H1 (cell line): ENCODE measurements at regions of chr3 and their contacts with region 1.

Region 1: GRCh38 chr3:8622873-8623691 is 21.5 kb downstream of the SSUH2 start:
- DNase-seq: peak; percentile 61 to 89
- H3K4me3 ChIP-seq: no peak overlapping the region; a peak in 1 of 8 replicates
- H3K27ac ChIP-seq: no peak overlapping the region
- H3K4me1 ChIP-seq: peaks cover 0 to 10% (median 3%) of the 10 kb centered on the region in 4 experiments; a peak in 5 of 7 replicates
- H3K27me3 ChIP-seq: no peaks in the 10 kb centered on the region
- CTCF ChIP-seq: peak; percentile 93 to 98 (median 93)
- EP300 ChIP-seq: peak in 1 of 2 experiments; percentile 44; a peak in 1 of 3 replicates
- POLR2A ChIP-seq: no peak
- RAD21 ChIP-seq: peak; percentile 99

Region 2: GRCh38 chr3:8254489-8254888 is 368.6 kb before region 1 on chr3:
- CTCF ChIA-PET with region 1: no interaction called
- POLR2A ChIA-PET with region 1: no interaction called
- DNase-seq: no peak
- H3K4me3 ChIP-seq: no peak overlapping the region
- H3K27ac ChIP-seq: no peak overlapping the region
- H3K4me1 ChIP-seq: no peaks in the 10 kb centered on the region
- H3K27me3 ChIP-seq: no peaks in the 10 kb centered on the region
- CTCF ChIP-seq: no peak
- EP300 ChIP-seq: no peak
- POLR2A ChIP-seq: no peak
- RAD21 ChIP-seq: no peak

Region 3: DNA sequence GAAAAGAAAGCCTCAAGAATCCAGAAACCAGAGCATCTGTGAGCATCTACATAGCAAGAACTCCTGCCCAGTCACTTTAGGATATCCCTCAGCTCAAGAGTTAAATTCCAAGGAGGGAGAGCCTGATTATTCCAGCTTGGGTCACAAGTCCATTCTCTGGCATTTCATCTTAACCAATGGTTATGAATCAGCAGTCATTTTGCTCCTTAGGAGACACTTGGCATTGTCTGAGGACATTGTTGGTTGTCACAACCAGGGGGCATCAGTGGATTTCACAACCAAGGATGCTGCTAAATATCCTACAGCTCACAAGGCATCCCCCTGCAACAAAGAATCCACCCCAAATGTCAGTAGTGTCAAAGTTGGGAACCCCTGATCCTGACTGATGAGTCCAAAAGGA is 172.5 kb before region 1 on chr3:
- CTCF ChIA-PET with region 1: interaction called, 12 read pairs
- POLR2A ChIA-PET with region 1: no interaction called
- DNase-seq: no peak
- H3K4me3 ChIP-seq: no peak overlapping the region
- H3K27ac ChIP-seq: no peak overlapping the region
- H3K4me1 ChIP-seq: no peaks in the 10 kb centered on the region
- H3K27me3 ChIP-seq: no peaks in the 10 kb centered on the region
- CTCF ChIP-seq: peak in 2 of 3 experiments; percentile 43 to 49; a peak in 3 of 4 replicates
- EP300 ChIP-seq: no peak
- POLR2A ChIP-seq: no peak
- RAD21 ChIP-seq: peak; percentile 71 to 77

Region 4: GRCh38 chr3:8539419-8539818 is 83.7 kb before region 1 on chr3:
- CTCF ChIA-PET with region 1: no interaction called
- POLR2A ChIA-PET with region 1: no interaction called
- DNase-seq: no peak
- H3K4me3 ChIP-seq: no peak overlapping the region
- H3K27ac ChIP-seq: no peak overlapping the region
- H3K4me1 ChIP-seq: peaks cover 0 to 8% (median 5%) of the 10 kb centered on the region in 4 experiments; a peak in 4 of 7 replicates
- H3K27me3 ChIP-seq: no peaks in the 10 kb centered on the region
- CTCF ChIP-seq: no peak
- EP300 ChIP-seq: no peak
- POLR2A ChIP-seq: no peak
- RAD21 ChIP-seq: no peak

Region 5: DNA sequence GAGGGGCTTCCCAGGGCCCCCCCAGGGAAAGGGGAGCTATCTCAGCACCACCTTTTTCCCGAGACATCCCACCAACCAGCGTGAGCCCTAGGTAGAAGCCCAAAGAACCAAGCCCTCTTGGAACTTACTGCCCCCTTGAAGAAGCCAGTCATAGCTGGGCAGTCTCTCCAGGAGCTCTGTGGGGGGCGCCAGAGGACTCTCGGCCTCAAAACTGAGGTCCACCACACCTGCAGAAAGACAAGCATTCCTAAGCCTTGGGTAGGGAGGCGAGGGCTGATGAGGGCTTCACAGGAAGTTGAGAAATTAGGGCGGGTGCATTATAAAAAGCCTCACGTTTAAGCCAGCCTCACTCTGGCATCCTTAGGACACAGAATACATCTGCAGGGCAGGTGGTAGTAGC is 12.5 kb after region 1 on chr3:
- CTCF ChIA-PET with region 1: interaction called, 10 read pairs
- POLR2A ChIA-PET with region 1: no interaction called
- DNase-seq: no peak
- H3K4me3 ChIP-seq: no peak overlapping the region
- H3K27ac ChIP-seq: no peak overlapping the region
- H3K4me1 ChIP-seq: peaks cover 0 to 3% (median 0%) of the 10 kb centered on the region in 4 experiments; a peak in 1 of 7 replicates
- H3K27me3 ChIP-seq: no peaks in the 10 kb centered on the region; a peak in 1 of 7 replicates
- CTCF ChIP-seq: peak; percentile 30 to 49 (median 41)
- EP300 ChIP-seq: no peak
- POLR2A ChIP-seq: no peak
- RAD21 ChIP-seq: peak; percentile 39 to 49